Astrocyte of the cerebellum (primary cell): ENCODE measurements at regions of chr6 and their contacts with region 1.

Region 1: GRCh38 chr6:86306210-86306609 is 631.1 kb upstream of the HTR1E start:
- DNase-seq: no peak
- H3K4me3 ChIP-seq: no peak overlapping the region
- CTCF ChIP-seq: no peak

Region 2: GRCh38 chr6:86357877-86358276 is 51.7 kb after region 1 on chr6:
- in situ Hi-C with region 1: loop called (anchors 5 kb)
- DNase-seq: no peak
- H3K4me3 ChIP-seq: no peak overlapping the region
- CTCF ChIP-seq: no peak